K562 (cell line): ENCODE measurements at regions of chr3 and their contacts with region 1.

Region 1: GRCh38 chr3:39000008-39000450 is 51.7 kb downstream of the SCN11A start:
- DNase-seq: peak; percentile 35 to 77 (median 52)
- ATAC-seq: peak; percentile 99
- H3K4me3 ChIP-seq: no peak overlapping the region
- H3K27ac ChIP-seq: no peak overlapping the region
- H3K4me1 ChIP-seq: no peaks in the 10 kb centered on the region
- H3K27me3 ChIP-seq: peaks cover 0 to 4% of the 10 kb centered on the region in 2 experiments; a peak in 2 of 5 replicates
- CTCF ChIP-seq: peak; percentile 96 to 100 (median 99)
- EP300 ChIP-seq: no peak
- POLR2A ChIP-seq: no peak
- RAD21 ChIP-seq: peak; percentile 99 to 100

Region 2: GRCh38 chr3:38496131-38496910 is 503.7 kb before region 1 on chr3 and contains the start of gene EXOG:
- CTCF ChIA-PET with region 1: interaction called, 5 read pairs
- POLR2A ChIA-PET with region 1: no interaction called
- in situ Hi-C with region 1: no loop called
- intact Hi-C with region 1: loop called (anchors 1 kb)
- DNase-seq: peak; percentile 97 to 100 (median 100)
- ATAC-seq: peak; percentile 99
- H3K4me3 ChIP-seq: peak within 1 kb of the TSS; percentile 63
- H3K27ac ChIP-seq: peak within 1 kb of the TSS; percentile 69
- H3K4me1 ChIP-seq: peaks cover 4 to 5% of the 10 kb centered on the region in 2 experiments; a peak in 4 of 5 replicates
- H3K27me3 ChIP-seq: no peaks in the 10 kb centered on the region
- CTCF ChIP-seq: peak; percentile 87 to 96 (median 90)
- EP300 ChIP-seq: peak; percentile 12; the same call in 1 of the 2 replicates
- POLR2A ChIP-seq: peak; percentile 86
- RAD21 ChIP-seq: peak; percentile 82 to 83
- polyA plus RNA-seq, gene EXOG: 13.1 to 21.7 TPM

Region 3: GRCh38 chr3:38521391-38521987 is 478.5 kb before region 1 on chr3:
- CTCF ChIA-PET with region 1: interaction called, 15 read pairs
- POLR2A ChIA-PET with region 1: interaction called, 3 read pairs
- in situ Hi-C with region 1: no loop called
- intact Hi-C with region 1: loop called (anchors 10 kb)
- DNase-seq: peak; percentile 65 to 86 (median 67)
- ATAC-seq: peak; percentile 87
- H3K4me3 ChIP-seq: no peak overlapping the region
- H3K27ac ChIP-seq: no peak overlapping the region
- H3K4me1 ChIP-seq: no peaks in the 10 kb centered on the region
- H3K27me3 ChIP-seq: no peaks in the 10 kb centered on the region
- CTCF ChIP-seq: peak; percentile 83 to 94 (median 91)
- EP300 ChIP-seq: no peak
- POLR2A ChIP-seq: no peak
- RAD21 ChIP-seq: peak; percentile 75 to 85

Region 4: DNA sequence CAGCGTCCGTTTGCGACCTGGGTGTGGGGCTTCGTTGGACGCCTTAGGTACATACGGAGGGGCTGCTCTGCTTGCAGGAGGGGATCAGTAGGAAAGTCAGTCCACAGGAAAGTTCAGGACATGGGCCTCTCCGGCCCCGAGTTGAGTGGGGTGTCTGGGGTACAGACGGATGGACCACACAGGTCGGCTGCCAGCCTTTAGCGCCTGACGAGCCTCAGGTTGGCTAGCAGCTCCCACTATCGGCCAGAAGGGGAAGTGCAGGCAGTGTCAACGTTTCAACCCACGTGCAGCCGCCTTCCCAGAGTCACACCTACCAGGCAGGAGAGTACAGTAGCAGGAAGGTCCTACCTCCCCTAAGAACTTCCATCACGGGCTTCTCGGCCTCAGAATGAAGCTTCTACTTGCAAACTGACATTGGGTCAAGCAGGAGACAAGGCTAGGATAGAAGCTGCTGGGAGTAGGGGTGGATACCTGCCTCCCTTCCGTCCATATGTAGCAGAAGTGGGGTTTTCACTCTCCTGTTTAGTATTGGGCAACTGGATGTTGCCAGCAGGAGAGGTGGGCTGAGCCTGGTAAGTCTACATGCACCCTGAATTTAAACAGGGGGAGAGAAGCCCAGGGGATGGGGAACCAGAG is 348.8 kb before region 1 on chr3:
- CTCF ChIA-PET with region 1: interaction called, 11 read pairs
- POLR2A ChIA-PET with region 1: no interaction called
- in situ Hi-C with region 1: no loop called
- intact Hi-C with region 1: loop called (anchors 10 kb)
- DNase-seq: peak; percentile 78 to 86 (median 84)
- ATAC-seq: peak; percentile 76
- H3K4me3 ChIP-seq: no peak overlapping the region
- H3K27ac ChIP-seq: no peak overlapping the region
- H3K4me1 ChIP-seq: peaks cover 6 to 18% of the 10 kb centered on the region in 2 experiments
- H3K27me3 ChIP-seq: peaks cover 14 to 34% of the 10 kb centered on the region in 2 experiments; a peak in 4 of 5 replicates
- CTCF ChIP-seq: peak; percentile 95 to 99 (median 97)
- EP300 ChIP-seq: no peak
- POLR2A ChIP-seq: no peak
- RAD21 ChIP-seq: peak; percentile 66 to 82

Region 5: DNA sequence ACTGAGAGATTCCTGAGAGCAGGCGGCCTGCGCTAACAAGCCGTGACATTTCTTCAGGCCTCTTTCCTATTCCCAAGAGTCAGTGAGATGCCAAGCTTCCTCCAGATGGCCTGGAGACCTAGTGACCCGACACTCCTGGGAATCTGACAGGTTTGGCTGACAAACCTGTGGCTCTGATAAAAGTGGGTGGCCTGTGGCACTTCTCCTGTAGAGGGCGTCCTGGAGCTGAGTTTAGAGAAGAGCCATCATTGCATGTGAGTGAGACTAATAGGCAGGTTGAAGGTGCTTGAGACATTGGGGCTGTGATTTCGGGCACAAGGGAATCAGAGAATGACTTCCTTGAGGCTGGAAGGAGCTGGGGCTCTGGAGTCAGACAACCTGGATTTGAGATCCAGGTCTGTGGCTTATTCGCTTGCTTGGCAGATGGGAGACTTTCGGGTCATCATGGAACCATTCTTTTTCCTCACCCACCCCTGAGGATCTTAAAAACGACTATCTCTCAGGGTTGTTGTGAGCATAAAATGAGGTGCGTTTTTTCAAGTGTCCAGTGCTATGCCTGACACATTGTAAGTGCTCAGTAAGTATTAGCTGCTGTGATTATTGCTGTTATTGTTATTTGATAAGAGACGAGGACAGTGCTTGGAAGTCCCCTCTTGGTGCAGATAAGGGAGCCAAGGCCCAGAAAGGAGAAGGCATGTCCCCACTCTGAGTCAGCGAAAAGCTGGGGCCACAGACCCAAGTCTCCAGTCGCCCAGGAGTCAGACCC is 261.2 kb before region 1 on chr3:
- CTCF ChIA-PET with region 1: interaction called, 4 read pairs
- POLR2A ChIA-PET with region 1: no interaction called
- in situ Hi-C with region 1: no loop called
- intact Hi-C with region 1: loop called (anchors 2 kb)
- DNase-seq: peak; percentile 67 to 75 (median 68)
- ATAC-seq: peak; percentile 92
- H3K4me3 ChIP-seq: no peak overlapping the region
- H3K27ac ChIP-seq: no peak overlapping the region
- H3K4me1 ChIP-seq: peaks cover 4 to 11% of the 10 kb centered on the region in 2 experiments; a peak in 3 of 5 replicates
- H3K27me3 ChIP-seq: peaks cover 2 to 8% of the 10 kb centered on the region in 2 experiments; a peak in 4 of 5 replicates
- CTCF ChIP-seq: peak; percentile 77 to 84 (median 84)
- EP300 ChIP-seq: no peak
- POLR2A ChIP-seq: no peak
- RAD21 ChIP-seq: peak; percentile 45 to 74

Region 6: DNA sequence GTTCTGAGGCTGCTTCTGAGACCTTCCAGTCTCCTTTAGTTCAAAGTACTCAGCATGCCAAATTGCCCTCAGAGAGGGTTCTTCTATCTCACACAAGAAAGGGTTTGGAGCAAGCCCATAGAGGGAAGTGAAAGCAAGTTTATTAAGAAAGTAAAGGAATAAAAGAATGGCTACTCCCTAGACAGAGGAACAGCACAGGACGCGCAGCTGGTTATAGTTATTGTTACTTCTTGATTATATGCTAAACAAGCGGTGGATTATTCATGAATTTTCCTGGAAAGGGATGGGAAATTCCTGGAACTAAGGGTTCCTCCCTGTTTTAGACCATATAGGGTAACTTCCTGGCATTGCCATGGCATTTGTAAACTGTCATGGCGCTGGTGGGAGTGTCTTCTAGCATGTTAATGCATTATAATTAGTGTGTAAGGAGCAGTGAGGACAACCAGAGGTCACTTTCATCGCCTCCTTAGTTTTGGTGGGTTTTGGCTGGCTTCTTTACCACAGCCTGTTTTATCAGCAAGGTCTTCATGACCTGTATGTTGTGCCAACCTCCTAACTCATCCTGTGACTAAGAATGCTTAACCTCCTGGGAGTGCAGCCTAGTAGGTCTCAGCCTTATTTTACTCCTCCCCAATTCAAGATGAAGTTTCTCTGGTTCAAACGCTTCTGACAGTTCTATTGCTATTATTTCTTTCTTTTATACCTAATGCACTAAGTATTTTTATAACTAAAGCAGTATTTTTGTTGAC is 25.4 kb after region 1 on chr3:
- CTCF ChIA-PET with region 1: interaction called, 61 read pairs
- POLR2A ChIA-PET with region 1: interaction called, 6 read pairs
- in situ Hi-C with region 1: no loop called
- intact Hi-C with region 1: loop called (anchors 1 kb)
- DNase-seq: no peak
- ATAC-seq: no peak
- H3K4me3 ChIP-seq: no peak overlapping the region
- H3K27ac ChIP-seq: no peak overlapping the region
- H3K4me1 ChIP-seq: peaks cover 6 to 50% of the 10 kb centered on the region in 2 experiments; a peak in 4 of 5 replicates
- H3K27me3 ChIP-seq: no peaks in the 10 kb centered on the region
- CTCF ChIP-seq: no peak
- EP300 ChIP-seq: no peak
- POLR2A ChIP-seq: no peak
- RAD21 ChIP-seq: no peak

Region 7: GRCh38 chr3:39288300-39288808 is 288.3 kb after region 1 on chr3:
- CTCF ChIA-PET with region 1: interaction called, 8 read pairs
- POLR2A ChIA-PET with region 1: no interaction called
- in situ Hi-C with region 1: no loop called
- intact Hi-C with region 1: loop called (anchors 1 kb)
- DNase-seq: peak; percentile 90 to 97 (median 94)
- ATAC-seq: peak; percentile 96
- H3K4me3 ChIP-seq: no peak overlapping the region
- H3K27ac ChIP-seq: no peak overlapping the region
- H3K4me1 ChIP-seq: peaks cover 3 to 21% of the 10 kb centered on the region in 2 experiments; a peak in 3 of 5 replicates
- H3K27me3 ChIP-seq: peaks cover 0 to 4% of the 10 kb centered on the region in 2 experiments; a peak in 1 of 5 replicates
- CTCF ChIP-seq: peak; percentile 99 to 100 (median 99)
- EP300 ChIP-seq: peak; percentile 29; the same call in 1 of the 2 replicates
- POLR2A ChIP-seq: no peak
- RAD21 ChIP-seq: peak; percentile 100